Right ventricle myocardium inferior (tissue), 1 donor: ENCODE measurements at regions of chr12 and their contacts with region 1.

Region 1: GRCh38 chr12:118436002-118436730 is 59.8 kb downstream of the SUDS3 start:
- DNase-seq: no peak
- ATAC-seq: no peak

Region 2: GRCh38 chr12:118625050-118625675 is 189.0 kb after region 1 on chr12:
- intact Hi-C with region 1: loop called (anchors 5 kb)
- DNase-seq: no peak
- ATAC-seq: peak; percentile 95